Left cardiac atrium (tissue), 4 donors: ENCODE measurements at regions of chr4 and their contacts with region 1.

Region 1: GRCh38 chr4:147173797-147174432 is 228.3 kb upstream of the TTC29 start:
- DNase-seq: peak; percentile 27
- ATAC-seq: peak; percentile 98 to 99

Region 2: GRCh38 chr4:147326591-147326990 is 152.7 kb after region 1 on chr4:
- intact Hi-C with region 1: loop called in 1 of 2 experiments (anchors 5 kb)
- DNase-seq: no peak
- ATAC-seq: peak in 1 of 2 donors; percentile 62

Region 3: DNA sequence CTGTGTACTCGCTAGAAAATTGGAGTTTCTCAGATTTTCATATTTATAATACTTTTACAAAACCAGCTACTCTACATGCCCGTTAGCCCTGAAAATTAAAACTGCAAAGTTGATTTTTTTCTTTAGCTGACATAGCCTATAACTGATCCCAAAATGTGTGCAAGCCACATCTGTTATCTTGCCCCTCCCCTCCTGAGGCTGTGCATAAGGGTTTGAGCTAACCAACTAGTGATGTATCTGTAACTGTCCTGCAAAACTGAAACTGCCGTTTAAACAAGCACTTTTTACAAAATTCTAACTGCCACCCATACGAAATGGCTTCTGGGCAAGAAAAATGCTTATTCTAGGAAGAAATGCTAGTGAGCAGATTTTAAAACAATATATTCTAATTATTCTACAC is 366.0 kb after region 1 on chr4:
- intact Hi-C with region 1: loop called in 1 of 2 experiments (anchors 5 kb)
- DNase-seq: no peak
- ATAC-seq: no peak